GM18951 (cell line): ENCODE measurements at regions of chr9 and their contacts with region 1.

Region 1: GRCh38 chr9:9612270-9612669 is 1000.5 kb downstream of the PTPRD start:
- POLR2A ChIP-seq: no peak

Region 2: DNA sequence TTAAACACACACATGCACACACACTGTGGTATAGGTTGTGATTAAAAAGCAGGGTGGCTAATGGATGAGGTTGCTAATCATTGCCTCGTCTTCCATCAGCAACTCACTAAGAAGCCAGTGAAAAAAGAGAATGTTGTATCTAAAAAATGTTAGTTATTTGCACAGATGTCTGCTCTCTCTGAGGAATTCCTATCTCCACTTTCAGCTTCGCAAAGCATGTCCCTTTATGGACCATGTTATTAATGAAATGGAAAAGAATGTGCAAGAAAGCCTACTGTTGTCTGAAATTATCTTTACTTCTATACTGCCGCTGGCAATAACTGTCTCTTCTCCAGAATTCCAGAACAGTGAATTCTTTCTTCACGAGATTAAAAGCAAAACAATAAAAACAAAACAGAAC is 163.5 kb before region 1 on chr9:
- in situ Hi-C with region 1: no loop called
- POLR2A ChIP-seq: no peak

Region 3: DNA sequence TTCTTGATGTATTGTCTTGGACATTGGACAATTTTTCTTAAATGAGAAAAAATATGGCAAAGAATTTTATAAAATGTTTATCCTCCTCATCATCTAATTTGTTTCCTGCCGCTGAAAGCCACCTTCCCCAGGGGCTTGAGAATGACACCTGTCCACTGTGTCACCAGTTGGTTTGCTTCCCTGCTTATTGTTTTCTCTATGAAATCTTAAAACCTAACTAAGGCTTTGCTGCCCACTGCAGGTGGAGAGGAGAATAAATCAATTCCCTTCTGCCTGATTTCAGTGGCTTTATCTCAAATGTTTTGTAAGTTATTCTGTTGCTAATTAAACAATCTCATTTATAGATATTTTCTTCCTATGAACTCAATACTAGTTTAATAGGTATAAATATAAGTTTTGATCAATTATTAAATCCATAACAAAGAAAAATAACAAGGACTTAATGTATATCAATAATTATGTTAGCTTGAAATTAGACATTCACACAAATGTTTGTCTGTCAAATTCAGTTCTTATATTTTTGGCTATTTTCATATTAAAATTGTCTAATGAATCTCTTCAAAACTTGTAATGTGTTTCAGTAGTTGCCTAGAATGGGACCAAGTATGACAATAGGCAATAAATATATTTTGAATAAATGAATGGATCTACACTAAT is 178.1 kb after region 1 on chr9:
- in situ Hi-C with region 1: loop called (anchors 10 kb)
- POLR2A ChIP-seq: no peak

Region 4: DNA sequence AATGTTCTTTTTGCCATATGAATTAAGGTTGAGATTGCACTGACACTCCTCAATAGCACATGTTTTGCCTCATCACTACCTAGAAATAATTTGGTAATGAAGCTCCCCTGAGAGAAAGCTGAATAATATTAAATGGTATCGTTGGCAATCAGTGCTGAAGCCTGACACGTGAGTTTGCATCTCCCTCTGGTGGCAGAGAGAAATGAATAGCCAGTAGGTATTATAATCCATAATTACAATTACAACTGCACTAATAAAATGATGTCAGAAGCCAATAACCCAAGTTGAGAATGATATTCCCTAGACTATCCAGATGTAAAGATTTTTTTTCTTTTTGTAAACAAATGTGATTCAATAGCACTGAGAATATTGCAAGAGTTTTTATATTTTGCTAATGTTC is 300.2 kb after region 1 on chr9:
- in situ Hi-C with region 1: loop called (anchors 25 kb)
- POLR2A ChIP-seq: no peak